ENCODE measurements at regions of chr1 and their contacts with region 1.

Region 1: GRCh38 chr1:168439456-168440375 is 104.1 kb downstream of the XCL2 start:
- DNase-seq: peak; percentile 60 to 86
- ATAC-seq: peak; percentile 95 to 99
- H3K4me3 ChIP-seq: no peak overlapping the region
- H3K27ac ChIP-seq: peak overlapping the region; percentile 10 to 61; a peak in 3 of 6 replicates
- H3K4me1 ChIP-seq: no peaks in the 10 kb centered on the region
- CTCF ChIP-seq: peak; percentile 92
- EP300 ChIP-seq: no peak
- POLR2A ChIP-seq: no peak
- RAD21 ChIP-seq: peak; percentile 96

Region 2: DNA sequence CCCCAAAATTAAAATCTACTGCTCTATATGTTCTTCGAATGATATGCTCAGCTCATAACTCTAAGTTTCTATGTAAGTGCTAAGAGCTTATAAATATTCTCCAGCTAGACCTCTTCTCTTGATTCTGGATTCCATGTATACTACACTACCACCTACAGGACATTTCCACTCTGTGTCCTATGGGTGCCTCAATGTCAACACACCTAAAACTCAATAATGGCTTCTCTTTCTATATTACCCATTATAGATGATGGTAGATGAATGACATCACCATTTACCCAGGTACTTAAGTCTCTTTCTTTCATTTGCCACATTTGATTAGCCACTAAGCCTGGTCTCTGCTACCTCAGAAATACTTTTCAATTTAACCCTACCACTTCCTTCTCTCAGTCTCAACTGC is 117.8 kb before region 1 on chr1:
- CTCF ChIA-PET with region 1: no interaction called
- POLR2A ChIA-PET with region 1: no interaction called
- DNase-seq: peak in 1 of 2 experiments; percentile 62
- ATAC-seq: peak; percentile 76 to 91; a peak in 5 of 6 replicates
- H3K4me3 ChIP-seq: no peak overlapping the region
- H3K27ac ChIP-seq: no peak overlapping the region; a peak in 2 of 6 replicates
- H3K4me1 ChIP-seq: peaks cover 17% of the 10 kb centered on the region
- CTCF ChIP-seq: peak; percentile 44; the same call in 2 of the 3 replicates
- EP300 ChIP-seq: no peak
- POLR2A ChIP-seq: no peak
- RAD21 ChIP-seq: peak; percentile 57 to 67

Region 3: GRCh38 chr1:168414914-168415313 is 24.8 kb before region 1 on chr1:
- CTCF ChIA-PET with region 1: no interaction called
- POLR2A ChIA-PET with region 1: no interaction called
- DNase-seq: no peak
- ATAC-seq: no peak
- H3K4me3 ChIP-seq: no peak overlapping the region
- H3K27ac ChIP-seq: no peak overlapping the region
- H3K4me1 ChIP-seq: no peaks in the 10 kb centered on the region
- CTCF ChIP-seq: no peak
- EP300 ChIP-seq: no peak
- POLR2A ChIP-seq: no peak
- RAD21 ChIP-seq: no peak

Region 4: GRCh38 chr1:168428063-168428731 is 11.5 kb before region 1 on chr1:
- CTCF ChIA-PET with region 1: interaction called, 74 read pairs
- POLR2A ChIA-PET with region 1: no interaction called
- DNase-seq: no peak
- ATAC-seq: no peak
- H3K4me3 ChIP-seq: no peak overlapping the region
- H3K27ac ChIP-seq: no peak overlapping the region
- H3K4me1 ChIP-seq: no peaks in the 10 kb centered on the region
- CTCF ChIP-seq: no peak
- EP300 ChIP-seq: no peak
- POLR2A ChIP-seq: no peak
- RAD21 ChIP-seq: no peak

Region 5: DNA sequence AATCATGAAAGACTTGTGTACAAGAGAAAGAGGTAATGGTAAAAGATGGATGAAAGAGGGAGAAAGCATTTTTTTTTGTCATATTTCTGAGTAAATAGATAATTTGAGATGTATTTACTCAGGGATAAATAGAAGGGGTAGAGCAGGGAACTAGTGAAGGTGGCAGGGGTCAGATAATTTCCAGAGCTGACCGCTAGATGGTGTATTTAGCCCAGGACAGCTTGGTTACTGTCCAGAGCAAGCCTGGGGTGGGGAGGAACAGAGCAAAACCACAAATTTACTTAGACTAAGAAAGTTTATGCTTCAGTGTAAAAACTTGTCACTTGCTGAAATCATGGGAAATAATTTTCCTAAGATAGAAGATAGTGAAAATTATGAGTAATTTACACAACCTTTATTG is 12.6 kb after region 1 on chr1:
- CTCF ChIA-PET with region 1: interaction called, 14 read pairs
- POLR2A ChIA-PET with region 1: no interaction called
- DNase-seq: peak in 1 of 2 experiments; percentile 29
- ATAC-seq: peak in 1 of 2 experiments; percentile 49; a peak in 1 of 6 replicates
- H3K4me3 ChIP-seq: no peak overlapping the region
- H3K27ac ChIP-seq: no peak overlapping the region
- H3K4me1 ChIP-seq: no peaks in the 10 kb centered on the region
- CTCF ChIP-seq: peak; percentile 33; the same call in 1 of the 3 replicates
- EP300 ChIP-seq: no peak
- POLR2A ChIP-seq: no peak
- RAD21 ChIP-seq: peak in 1 of 2 experiments; percentile 34; a peak in 2 of 5 replicates

Region 6: GRCh38 chr1:168520052-168520751 is 80.5 kb after region 1 on chr1:
- CTCF ChIA-PET with region 1: no interaction called
- POLR2A ChIA-PET with region 1: no interaction called
- DNase-seq: no peak
- ATAC-seq: no peak
- H3K4me3 ChIP-seq: no peak overlapping the region
- H3K27ac ChIP-seq: no peak overlapping the region
- H3K4me1 ChIP-seq: no peaks in the 10 kb centered on the region
- CTCF ChIP-seq: no peak
- EP300 ChIP-seq: no peak
- POLR2A ChIP-seq: no peak
- RAD21 ChIP-seq: no peak

Region 7: DNA sequence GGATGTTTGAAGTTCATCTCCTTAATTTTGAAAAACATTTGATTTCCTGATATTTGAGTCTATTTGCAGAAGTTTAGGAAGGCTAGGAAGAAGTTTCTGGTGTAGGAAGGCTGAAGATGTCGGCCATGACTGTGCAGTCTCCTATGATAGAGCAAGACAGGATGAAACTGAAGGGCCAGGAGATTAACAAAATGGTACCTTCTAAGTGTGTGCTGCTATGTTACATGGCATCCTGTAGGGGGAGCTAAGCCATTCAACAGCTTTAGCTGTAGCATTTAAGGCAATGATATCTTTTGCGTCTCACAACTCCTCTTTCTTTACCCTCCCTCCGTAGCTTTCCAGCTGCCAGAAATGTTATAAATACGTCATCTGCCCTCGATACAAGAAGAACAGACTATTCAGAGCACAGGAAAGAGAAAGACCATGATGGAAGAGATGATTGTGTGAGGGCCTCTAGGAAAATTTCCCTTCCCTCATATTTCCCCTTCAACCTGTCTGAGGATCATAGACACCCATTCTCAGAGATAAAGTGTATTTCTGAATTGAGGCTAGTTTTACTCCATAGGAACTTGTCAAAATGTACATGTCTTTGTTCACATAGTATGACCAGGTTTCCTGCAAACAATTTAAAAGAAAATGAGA is 197.8 kb after region 1 on chr1:
- CTCF ChIA-PET with region 1: no interaction called
- POLR2A ChIA-PET with region 1: no interaction called
- DNase-seq: peak in 1 of 2 experiments; percentile 67
- ATAC-seq: peak; percentile 62 to 75; a peak in 4 of 6 replicates
- H3K4me3 ChIP-seq: no peak overlapping the region
- H3K27ac ChIP-seq: peak overlapping the region; percentile 53; a peak in 2 of 6 replicates
- H3K4me1 ChIP-seq: peaks cover 11% of the 10 kb centered on the region; the same call in 2 of the 3 replicates
- CTCF ChIP-seq: no peak; the same call in 2 of the 3 replicates
- EP300 ChIP-seq: no peak
- POLR2A ChIP-seq: no peak
- RAD21 ChIP-seq: peak in 1 of 2 experiments; percentile 55; a peak in 2 of 5 replicates

Measured in A549 (cell line).